Dorsolateral prefrontal cortex (tissue), 120 donors: ENCODE measurements at regions of chr10 and their contacts with region 1.

Region 1: DNA sequence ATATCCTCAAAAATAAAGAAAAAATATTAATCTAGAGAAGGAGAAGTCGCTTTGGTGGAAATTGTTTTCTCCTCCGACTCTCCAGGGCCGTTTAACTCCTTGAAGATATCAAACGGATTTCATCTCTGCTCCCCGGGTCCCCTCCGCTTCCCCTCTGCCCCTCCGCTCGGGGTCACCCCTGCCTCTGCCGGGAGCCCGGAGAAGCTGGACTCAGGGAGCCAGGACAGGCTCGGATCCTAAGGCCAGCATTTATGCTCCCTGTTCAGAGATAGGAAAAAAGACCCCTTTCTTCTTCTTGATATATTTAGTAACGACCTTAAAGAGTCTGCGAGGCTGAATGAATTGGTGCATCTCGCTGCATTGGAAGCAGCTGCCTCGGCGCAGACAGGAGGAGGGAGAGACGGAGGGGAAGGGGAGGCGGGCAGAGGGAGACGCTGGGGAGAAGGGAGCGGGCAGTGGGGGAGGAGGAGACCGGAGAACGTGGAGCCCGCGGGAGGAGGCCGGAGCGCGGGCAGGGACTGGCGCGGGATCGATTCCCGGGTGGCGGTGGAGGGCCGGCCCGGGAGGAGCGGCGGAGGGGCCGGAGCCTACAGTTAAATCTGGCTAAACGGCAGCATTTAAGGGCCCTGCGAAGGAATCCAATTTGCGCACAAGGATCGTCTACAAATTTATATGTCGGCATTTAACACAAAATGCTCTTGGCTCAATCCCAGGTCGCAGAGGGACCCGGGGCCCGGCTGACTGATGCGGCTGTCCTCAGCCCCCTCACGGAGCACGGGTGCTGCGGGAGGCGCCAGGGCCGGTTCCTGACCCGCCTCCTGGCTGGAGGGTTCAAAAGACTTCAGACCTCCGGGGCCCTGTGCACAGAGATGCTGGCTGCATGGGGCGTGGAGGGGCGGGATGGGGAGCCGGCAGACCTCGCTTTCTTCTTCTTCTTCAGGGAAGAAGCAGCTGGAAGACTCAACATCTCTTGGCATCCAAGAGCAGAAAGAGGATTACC is 55.6 kb downstream of the CRTAC1 start:
- DNase-seq: peak in 8 of 10 donors; percentile 28 to 68 (median 50)
- H3K4me3 ChIP-seq: peak overlapping the region in 56 of 59 donors; percentile 16 to 64 (median 47)
- H3K27ac ChIP-seq: peak overlapping the region in 56 of 59 donors; percentile 9 to 87 (median 70)
- H3K27me3 ChIP-seq: peaks cover 0 to 35% (median 0%) of the 10 kb centered on the region in 45 donors
- CTCF ChIP-seq: no peak

Region 2: GRCh38 chr10:97921581-97922021 is 53.2 kb before region 1 on chr10:
- intact Hi-C with region 1: loop called in 1 of 2 experiments (anchors 5 kb)
- DNase-seq: peak in 2 of 10 donors; percentile 17 to 45
- H3K4me3 ChIP-seq: no peak overlapping the region
- H3K27ac ChIP-seq: peak overlapping the region in 1 of 59 donors; percentile 84
- H3K27me3 ChIP-seq: peaks cover 0 to 3% (median 0%) of the 10 kb centered on the region in 45 donors
- CTCF ChIP-seq: no peak